Activated naive CD4-positive, alpha-beta T cell treated with anti-CD3 and anti-CD28 coated beads for 36 hours (primary cell): ENCODE measurements at regions of chr4 and their contacts with region 1.

Region 1: DNA sequence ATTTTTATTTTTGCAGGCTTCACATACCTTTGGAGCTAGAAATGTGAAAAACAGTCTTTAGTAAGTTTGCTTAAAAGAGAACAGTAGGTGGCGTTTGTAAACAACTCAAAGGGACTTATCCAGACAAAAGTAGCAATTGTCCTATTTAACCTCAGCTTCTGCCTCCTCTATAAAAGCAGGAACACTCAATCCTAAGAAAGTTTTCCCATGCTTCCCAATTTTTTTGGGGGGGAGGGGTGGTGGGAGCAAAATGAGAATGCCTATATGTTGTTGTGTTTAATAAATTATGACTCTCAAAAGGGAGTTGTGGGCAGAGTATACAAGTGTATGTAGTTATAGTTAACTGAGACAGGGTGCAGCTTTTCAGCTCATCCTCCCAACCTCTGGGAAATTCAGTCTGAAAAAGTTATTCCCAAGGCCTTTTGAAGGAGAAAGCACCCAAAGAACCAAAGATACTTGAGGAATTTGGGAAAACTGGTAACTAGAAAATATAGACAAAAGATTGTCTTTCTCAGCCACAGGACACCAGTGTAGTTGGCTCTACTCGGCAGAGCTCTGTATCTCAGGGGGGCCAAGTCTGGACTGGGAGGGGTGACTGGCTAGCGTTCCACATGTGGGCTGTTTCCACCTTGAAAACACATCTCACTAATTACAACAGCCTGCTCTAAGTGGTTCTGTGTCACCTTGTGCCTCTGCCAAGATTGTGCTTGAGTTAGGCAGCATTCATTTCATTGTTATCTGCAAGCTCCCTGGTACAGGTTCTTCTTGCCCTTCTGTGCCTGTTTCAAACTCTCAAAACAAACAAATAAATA is 2.8 kb downstream of the SFRP2 start:
- DNase-seq: no peak
- H3K4me3 Mint-ChIP-seq: no peak overlapping the region
- H3K27ac Mint-ChIP-seq: no peak overlapping the region
- H3K4me1 Mint-ChIP-seq: peaks cover 27% of the 10 kb centered on the region
- H3K27me3 Mint-ChIP-seq: peaks cover 55% of the 10 kb centered on the region

Region 2: DNA sequence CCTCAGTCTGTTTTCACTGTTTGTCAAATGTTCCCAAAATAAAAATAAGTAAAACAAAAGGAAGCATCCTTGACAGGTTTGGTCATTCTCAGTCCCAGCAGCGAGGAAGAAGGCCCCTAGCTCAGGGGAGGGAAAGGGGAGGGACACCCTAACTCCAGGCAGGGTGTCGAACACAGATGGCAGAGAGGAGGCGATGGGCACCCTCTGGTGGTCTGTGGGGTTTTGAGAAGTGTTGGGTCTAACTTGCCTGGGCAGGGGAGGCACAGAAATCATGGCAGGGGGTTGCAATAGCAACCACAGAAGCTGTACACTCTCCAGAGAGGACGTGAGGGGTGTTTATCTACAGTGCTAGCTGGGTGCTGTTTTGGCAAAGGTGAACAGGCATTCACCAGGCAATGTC is 232.5 kb after region 1 on chr4:
- CTCF ChIA-PET with region 1: interaction called, 14 read pairs
- intact Hi-C with region 1: loop called (anchors 1 kb)
- DNase-seq: peak; percentile 57
- H3K4me3 Mint-ChIP-seq: no peak overlapping the region
- H3K27ac Mint-ChIP-seq: no peak overlapping the region
- H3K4me1 Mint-ChIP-seq: no peaks in the 10 kb centered on the region
- H3K27me3 Mint-ChIP-seq: peaks cover 5% of the 10 kb centered on the region

Region 3: GRCh38 chr4:154024097-154024694 is 238.1 kb after region 1 on chr4:
- CTCF ChIA-PET with region 1: interaction called, 14 read pairs
- intact Hi-C with region 1: no loop called
- DNase-seq: peak; percentile 34
- H3K4me3 Mint-ChIP-seq: no peak overlapping the region
- H3K27ac Mint-ChIP-seq: no peak overlapping the region
- H3K4me1 Mint-ChIP-seq: no peaks in the 10 kb centered on the region
- H3K27me3 Mint-ChIP-seq: peaks cover 19% of the 10 kb centered on the region

Region 4: DNA sequence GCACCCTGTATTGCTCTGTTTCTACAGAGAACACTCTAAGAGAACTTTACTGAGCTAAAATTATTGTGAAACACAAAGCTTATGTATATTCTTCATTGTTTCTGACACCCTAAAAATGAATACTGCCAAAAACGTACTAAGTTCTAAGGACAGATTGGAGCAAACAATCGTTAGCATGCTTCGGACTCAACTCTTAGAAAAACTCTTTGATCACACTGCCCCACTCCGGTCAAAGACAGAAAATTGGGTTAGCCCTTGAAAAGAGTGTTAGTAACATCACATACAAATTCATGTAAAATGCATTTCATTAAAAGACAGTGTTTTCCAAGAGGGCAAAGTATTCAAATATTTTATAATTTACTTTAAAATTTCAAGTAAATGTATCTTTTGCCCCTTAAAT is 528.1 kb after region 1 on chr4:
- CTCF ChIA-PET with region 1: no interaction called
- intact Hi-C with region 1: loop called (anchors 5 kb)
- DNase-seq: peak; percentile 6
- H3K4me3 Mint-ChIP-seq: no peak overlapping the region
- H3K27ac Mint-ChIP-seq: no peak overlapping the region
- H3K4me1 Mint-ChIP-seq: no peaks in the 10 kb centered on the region
- H3K27me3 Mint-ChIP-seq: peaks cover 18% of the 10 kb centered on the region

Region 5: DNA sequence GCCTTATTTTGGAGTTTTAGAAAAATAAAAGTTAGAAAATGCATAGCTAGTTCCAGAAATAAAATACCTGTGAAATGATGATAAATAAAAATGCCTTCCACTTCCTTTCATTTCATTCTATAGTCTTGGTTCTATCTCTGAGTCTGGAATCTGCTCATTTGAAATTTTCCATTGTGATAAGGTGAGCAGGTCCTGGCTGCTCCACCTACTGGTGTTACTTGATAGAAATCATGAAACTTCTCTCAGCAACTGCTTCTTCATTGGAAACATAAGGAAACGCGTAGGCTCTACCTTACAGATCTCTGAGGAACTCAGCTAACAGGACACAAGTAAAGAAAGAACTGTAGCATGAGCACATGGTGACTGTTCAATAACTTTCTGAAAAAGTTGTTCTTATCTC is 563.7 kb after region 1 on chr4:
- CTCF ChIA-PET with region 1: no interaction called
- intact Hi-C with region 1: loop called (anchors 5 kb)
- DNase-seq: no peak
- H3K4me3 Mint-ChIP-seq: no peak overlapping the region
- H3K27ac Mint-ChIP-seq: no peak overlapping the region
- H3K4me1 Mint-ChIP-seq: no peaks in the 10 kb centered on the region
- H3K27me3 Mint-ChIP-seq: peaks cover 3% of the 10 kb centered on the region

Region 6: DNA sequence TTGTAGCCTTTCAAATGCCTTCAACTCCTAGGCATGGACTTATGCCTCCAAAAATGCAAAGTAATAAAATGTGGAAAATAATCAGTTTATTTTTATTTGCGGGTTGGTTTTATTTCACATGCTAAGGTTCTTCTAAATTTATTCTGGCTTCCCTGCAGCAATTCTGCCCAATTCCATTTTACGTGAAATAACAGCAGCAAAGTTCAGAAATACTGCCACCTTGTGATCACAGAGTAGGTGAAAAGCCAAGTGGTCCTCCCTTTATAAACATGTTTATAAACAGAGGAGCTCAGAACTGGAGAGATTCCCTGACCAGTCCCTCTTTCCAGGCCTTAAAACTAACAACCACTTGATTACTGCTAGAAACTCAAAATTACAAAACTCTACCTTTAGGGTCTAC is 720.1 kb after region 1 on chr4:
- CTCF ChIA-PET with region 1: interaction called, 4 read pairs
- intact Hi-C with region 1: loop called (anchors 2 kb)
- DNase-seq: no peak
- H3K4me3 Mint-ChIP-seq: no peak overlapping the region
- H3K27ac Mint-ChIP-seq: no peak overlapping the region
- H3K4me1 Mint-ChIP-seq: no peaks in the 10 kb centered on the region
- H3K27me3 Mint-ChIP-seq: peaks cover 31% of the 10 kb centered on the region

Region 7: DNA sequence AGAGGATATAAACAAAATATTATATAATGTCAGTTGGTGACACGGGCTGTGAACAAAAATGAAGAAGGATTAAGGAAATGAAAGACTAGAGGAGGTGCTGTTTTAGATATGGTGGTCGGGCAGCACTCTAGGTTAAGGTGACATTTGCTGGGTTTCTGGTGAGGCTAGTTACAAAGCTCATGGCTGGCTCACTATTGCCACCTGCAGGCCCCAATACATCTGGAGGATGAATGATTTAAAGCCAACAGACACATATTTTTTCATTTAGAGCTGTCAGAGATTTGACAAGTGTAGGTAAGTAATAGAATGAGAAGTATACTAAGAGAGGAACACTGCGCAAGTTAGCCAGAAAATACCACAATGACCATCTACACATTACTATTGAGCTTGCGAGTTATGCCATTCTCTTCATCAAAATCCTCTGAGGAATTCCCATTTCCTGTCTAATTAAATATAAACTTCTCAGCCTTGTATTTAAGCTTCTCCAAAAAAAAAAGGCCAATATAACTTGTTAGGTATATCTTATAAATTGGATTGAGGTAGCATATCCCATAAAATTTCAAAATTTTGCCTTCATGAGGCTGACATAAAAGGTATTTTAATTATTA is 832.7 kb after region 1 on chr4:
- CTCF ChIA-PET with region 1: interaction called, 3 read pairs
- intact Hi-C with region 1: loop called (anchors 5 kb)
- DNase-seq: peak; percentile 77
- H3K4me3 Mint-ChIP-seq: no peak overlapping the region
- H3K27ac Mint-ChIP-seq: no peak overlapping the region
- H3K4me1 Mint-ChIP-seq: peaks cover 10% of the 10 kb centered on the region
- H3K27me3 Mint-ChIP-seq: peaks cover under 1% of the 10 kb centered on the region